Psoas muscle (tissue), 8 donors: ENCODE measurements at regions of chrX and their contacts with region 1.

Region 1: DNA sequence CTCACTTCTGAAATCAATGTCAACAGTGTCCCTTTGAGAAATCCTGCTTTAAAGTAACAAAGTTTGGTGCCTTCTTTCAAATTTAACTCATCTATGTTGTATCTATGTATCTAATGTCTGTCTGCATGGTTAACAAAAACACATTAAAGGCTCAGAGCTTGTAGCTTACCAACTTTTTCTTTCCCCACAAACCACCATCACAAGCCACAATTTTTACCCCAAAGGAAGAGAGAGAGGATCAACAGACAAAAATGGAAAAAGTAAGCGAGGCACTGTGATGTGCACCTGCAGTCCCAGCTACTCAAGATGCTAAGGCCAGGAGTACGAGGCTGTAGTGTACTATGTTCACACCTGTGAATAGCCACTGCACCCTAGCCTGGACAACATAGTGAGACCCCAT is 17.2 kb downstream of the ATRX start:
- DNase-seq: no peak
- ATAC-seq: no peak
- H3K4me3 ChIP-seq: no peak overlapping the region
- H3K27ac ChIP-seq: no peak overlapping the region
- H3K4me1 ChIP-seq: peaks cover 6% of the 10 kb centered on the region
- H3K27me3 ChIP-seq: no peaks in the 10 kb centered on the region
- CTCF ChIP-seq: no peak

Region 2: DNA sequence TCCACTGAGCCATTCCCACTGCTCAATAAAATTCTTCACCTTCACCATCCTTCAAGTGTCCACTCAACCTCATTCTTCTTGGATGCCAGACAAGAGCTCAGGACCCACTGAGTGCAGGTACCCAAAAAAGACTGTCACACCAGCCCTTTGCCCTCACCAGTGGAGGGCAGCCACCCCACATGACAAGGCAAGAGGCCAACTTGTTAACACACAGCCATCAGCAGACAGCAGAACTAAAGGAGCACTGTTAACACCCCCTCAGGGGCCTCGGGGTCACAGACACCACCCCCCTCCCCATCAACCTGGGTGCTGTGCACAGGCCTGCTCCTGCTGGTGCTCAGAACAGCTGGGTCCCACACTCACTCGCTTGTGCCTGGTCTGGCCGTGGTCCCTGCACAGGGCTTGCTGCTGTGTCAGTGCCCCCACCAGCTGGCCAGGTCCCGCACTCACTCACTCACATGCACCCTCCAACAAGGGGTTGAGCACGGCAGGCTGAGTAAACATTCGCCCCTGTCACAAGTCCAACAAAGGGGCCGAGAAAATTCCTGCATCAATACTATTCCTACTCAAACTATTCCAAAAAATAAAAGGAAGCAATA is 36.9 kb before region 1 on chrX:
- intact Hi-C with region 1: loop called in 1 of 2 experiments (anchors 2 kb)
- DNase-seq: no peak
- ATAC-seq: peak in 2 of 4 donors; percentile 30 to 36
- H3K4me3 ChIP-seq: no peak overlapping the region
- H3K27ac ChIP-seq: no peak overlapping the region
- H3K4me1 ChIP-seq: no peaks in the 10 kb centered on the region
- H3K27me3 ChIP-seq: no peaks in the 10 kb centered on the region
- CTCF ChIP-seq: no peak

Region 3: GRCh38 chrX:78075787-78076389 is 307.1 kb after region 1 on chrX:
- intact Hi-C with region 1: no loop called
- DNase-seq: no peak
- ATAC-seq: no peak
- H3K4me3 ChIP-seq: no peak overlapping the region
- H3K27ac ChIP-seq: no peak overlapping the region
- H3K4me1 ChIP-seq: no peaks in the 10 kb centered on the region
- H3K27me3 ChIP-seq: no peaks in the 10 kb centered on the region
- CTCF ChIP-seq: no peak